ENCODE measurements at regions of chr12 and their contacts with region 1.

Region 1: GRCh38 chr12:116236148-116236731 is 41.3 kb downstream of the MED13L start:
- DNase-seq: peak in 5 of 10 donors; percentile 36 to 82 (median 51)

Region 2: DNA sequence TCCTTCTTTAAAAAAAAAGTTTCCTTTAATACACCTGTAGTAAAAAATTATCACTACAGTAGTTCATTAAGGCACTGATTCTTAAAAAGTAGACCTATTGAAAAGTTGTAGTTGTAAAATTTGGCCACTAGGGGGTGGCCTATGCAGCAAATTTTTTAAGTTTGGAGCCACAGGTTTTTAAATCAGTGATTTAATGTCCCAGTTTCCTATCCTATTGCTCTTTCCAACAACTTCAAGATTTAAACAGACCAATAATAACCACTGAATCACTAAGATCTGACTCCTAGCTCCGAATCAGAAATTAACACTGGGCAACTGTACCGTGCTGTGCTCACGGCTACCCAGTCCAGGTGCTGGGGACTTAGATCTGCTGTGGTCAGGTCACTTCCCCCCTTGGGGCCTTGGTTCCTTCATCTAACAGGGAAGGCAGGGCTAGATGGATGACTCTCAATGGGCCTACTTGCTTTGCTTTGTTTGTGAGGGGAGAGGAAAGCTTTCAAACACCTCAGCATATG is 238.1 kb before region 1 on chr12:
- intact Hi-C with region 1: loop called (anchors 1 kb)
- DNase-seq: no peak

Region 3: GRCh38 chr12:116015525-116015924 is 220.7 kb before region 1 on chr12:
- intact Hi-C with region 1: loop called (anchors 2 kb)
- DNase-seq: no peak

Region 4: DNA sequence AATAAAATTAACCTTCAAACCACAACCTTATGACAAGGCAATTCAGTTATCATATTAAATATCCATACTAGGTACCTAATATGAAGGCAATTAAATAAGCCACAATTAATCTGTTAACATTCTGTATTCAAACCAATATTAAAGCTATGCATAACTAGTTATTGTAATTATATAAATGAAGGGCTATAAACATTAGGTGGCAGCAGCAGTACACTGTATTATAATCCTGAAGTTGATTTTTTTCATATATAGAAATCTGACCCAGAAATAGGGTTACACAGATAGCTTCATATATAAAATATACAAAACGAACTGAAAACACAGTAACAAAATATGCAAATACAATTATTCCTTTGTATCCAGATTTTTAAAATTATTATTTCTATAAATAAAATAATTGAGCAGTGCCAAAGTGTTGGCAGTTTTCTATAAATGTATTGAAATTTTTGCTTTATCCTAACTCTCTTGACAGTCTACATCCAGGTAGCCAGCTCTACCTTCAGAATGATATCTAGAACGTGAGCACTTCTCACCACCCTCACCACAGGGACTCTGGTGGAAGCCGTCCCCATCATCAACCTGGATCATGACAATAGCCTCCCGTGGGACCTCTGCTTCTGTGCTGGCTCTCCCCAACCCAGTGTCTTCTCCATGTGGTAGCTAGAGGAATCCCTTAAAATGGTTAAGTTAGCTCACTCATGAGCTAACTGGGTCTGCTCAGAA is 95.0 kb before region 1 on chr12:
- intact Hi-C with region 1: loop called (anchors 2 kb)
- DNase-seq: no peak

Measured in posterior cingulate gyrus (tissue), 11 donors.